Left cardiac atrium (tissue), 4 donors: ENCODE measurements at regions of chr7 and their contacts with region 1.

Region 1: GRCh38 chr7:87886875-87887274 is 10.6 kb downstream of the DBF4 start:
- DNase-seq: no peak
- ATAC-seq: no peak

Region 2: DNA sequence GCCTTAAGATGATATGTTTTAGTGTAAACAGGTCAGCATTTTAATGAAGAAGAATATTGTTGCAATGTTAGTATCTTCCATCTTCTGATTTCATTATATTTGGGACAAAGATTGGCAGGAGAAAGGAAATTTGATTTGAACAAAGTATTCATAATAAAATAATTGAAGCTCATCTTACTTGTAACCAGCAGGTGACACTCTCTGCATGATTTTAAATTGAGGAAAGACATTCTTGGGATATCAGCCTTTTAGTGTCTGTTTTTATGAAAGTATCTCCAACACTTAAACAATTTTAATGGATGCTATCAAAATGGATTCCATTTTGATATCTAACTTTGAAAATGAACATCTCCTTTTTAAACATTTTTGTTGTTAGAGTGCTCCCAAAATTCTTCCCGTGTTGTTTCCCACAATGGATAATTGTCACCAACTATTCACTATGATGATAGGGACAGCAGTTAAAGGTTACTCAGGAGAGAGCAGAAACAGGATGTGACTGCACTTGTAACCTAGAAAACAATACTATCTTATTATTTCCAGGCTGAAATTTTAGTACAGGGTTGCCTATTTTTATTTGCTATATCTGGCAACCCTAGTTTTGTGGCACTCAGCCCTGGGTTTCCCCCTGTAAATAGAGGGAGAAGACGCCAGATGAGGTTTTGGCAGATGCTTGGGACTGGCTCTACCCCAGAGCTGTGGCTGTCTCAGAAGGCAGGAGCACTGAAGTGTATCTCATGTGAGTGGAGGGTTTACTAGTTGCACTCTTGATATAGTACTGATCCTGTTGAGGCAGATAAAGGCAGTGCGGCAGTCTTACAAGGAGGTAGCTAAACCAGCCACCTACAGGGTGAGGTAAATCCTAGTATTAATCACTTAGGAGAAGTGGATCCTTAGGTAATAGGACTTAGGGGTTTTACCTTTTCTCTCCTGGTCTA is 380.4 kb before region 1 on chr7:
- intact Hi-C with region 1: loop called (anchors 5 to 10 kb)
- DNase-seq: no peak
- ATAC-seq: peak in 1 of 2 donors; percentile 38